Colonic mucosa (tissue), 4 donors: ENCODE measurements at regions of chr12 and their contacts with region 1.

Region 1: DNA sequence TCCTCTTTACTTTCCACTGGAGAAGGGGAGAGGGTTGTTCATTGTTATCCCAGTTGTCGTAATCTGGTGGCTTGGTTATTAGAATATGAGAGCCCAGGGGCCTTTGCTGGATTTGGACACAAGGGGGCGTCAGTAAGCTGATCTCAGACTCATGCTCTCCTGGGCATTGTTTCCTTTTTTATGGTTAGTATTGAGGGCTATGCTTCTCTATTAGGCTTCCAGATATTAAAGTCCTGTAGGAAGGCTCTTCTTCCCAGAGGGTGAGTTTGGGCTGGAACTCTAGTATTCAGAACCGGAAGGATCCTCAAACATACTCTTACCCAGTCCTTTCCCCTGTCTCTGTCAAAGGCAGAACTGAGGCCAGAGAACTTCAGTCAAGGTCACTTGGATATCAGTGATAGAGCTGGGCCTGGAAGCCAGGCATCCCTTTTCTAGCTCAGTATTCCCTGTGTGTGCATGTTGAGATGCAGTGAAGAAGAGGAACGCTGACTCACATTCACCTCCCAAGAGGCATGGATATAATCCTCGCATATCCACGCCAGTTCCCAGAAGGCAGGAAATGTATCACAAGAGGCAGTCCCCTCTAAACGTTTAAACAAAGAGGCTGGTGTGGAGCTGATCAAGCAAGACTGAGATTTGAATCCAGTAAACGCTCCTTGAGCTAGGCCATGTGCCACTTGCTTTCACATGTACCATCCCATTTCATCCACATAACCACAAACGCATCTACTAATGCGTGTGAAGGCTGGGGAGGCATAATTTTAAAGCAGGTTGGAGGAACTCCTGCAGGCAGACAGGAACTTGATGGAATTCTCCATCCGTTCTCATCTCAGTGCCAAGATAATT is 41.6 kb downstream of the UBE3B start:
- DNase-seq: peak; percentile 69
- H3K4me3 ChIP-seq: no peak overlapping the region
- H3K27ac ChIP-seq: peak overlapping the region; percentile 19
- H3K4me1 ChIP-seq: no peaks in the 10 kb centered on the region
- H3K27me3 ChIP-seq: no peaks in the 10 kb centered on the region
- CTCF ChIP-seq: peak; percentile 83

Region 2: GRCh38 chr12:109069307-109070231 is 449.5 kb before region 1 on chr12:
- intact Hi-C with region 1: no loop called
- DNase-seq: peak; percentile 80
- H3K4me3 ChIP-seq: peak overlapping the region; percentile 20
- H3K27ac ChIP-seq: peak overlapping the region; percentile 88
- H3K4me1 ChIP-seq: peaks cover 9% of the 10 kb centered on the region
- H3K27me3 ChIP-seq: no peaks in the 10 kb centered on the region
- CTCF ChIP-seq: no peak

Region 3: GRCh38 chr12:109597795-109598427 is 78.9 kb after region 1 on chr12:
- intact Hi-C with region 1: loop called (anchors 5 kb)
- DNase-seq: peak; percentile 88
- H3K4me3 ChIP-seq: no peak overlapping the region
- H3K27ac ChIP-seq: no peak overlapping the region
- H3K4me1 ChIP-seq: no peaks in the 10 kb centered on the region
- H3K27me3 ChIP-seq: no peaks in the 10 kb centered on the region
- CTCF ChIP-seq: peak; percentile 93